Mammary epithelial cell (primary cell): ENCODE measurements at regions of chr3 and their contacts with region 1.

Region 1: DNA sequence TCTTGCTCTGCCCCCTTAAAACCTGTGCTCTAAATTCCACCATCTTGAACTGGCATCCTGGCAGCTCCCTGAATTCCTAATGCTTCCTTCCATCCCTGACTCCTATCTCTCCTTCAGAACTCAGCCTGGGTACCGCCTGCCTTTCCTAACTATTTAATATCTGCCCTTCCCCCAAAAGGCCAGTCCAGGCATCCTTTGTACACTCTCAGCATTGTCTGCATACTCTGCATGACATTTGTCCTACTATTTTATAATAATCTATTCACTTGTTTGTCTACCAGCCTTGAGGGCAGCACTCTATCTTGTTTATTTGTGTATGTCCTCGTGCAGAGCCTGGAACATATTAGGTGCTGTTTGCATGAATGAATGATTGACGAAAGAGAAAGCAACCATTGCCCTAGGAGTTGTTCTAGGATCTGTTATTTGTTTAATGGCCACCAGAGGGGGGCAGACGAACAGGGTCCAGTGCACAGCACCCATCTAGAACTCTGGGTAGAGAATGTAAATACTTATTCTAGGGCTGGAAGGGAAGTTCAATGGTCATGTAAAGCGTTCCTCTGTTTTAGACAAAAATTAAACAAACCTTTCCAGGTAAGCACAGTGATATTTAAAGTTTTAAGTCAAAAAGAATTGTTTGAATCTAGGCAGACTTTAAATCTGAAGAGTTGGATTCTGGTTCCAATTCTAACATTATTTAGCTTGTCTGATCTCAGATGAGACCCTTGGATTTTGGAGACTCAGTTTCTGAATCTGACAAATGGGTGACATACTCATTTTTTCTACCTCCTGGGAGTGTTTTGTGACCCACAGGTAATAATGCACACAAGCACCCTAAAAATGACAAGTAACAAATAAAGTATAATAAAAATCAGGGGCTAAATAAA is 125.8 kb upstream of the GALNT15 start:
- DNase-seq: peak; percentile 55
- H3K4me3 ChIP-seq: peak overlapping the region in 2 of 3 experiments; percentile 6 to 16
- H3K27ac ChIP-seq: no peak overlapping the region
- H3K4me1 ChIP-seq: no peaks in the 10 kb centered on the region
- H3K27me3 ChIP-seq: no peaks in the 10 kb centered on the region
- CTCF ChIP-seq: peak; percentile 58 to 81

Region 2: GRCh38 chr3:15815696-15816095 is 233.0 kb before region 1 on chr3:
- CTCF ChIA-PET with region 1: no interaction called
- dilution Hi-C with region 1: no loop called
- in situ Hi-C with region 1: no loop called
- intact Hi-C with region 1: loop called (anchors 1 kb)
- DNase-seq: peak; percentile 41
- H3K4me3 ChIP-seq: no peak overlapping the region
- H3K27ac ChIP-seq: no peak overlapping the region
- H3K4me1 ChIP-seq: peaks cover 9% of the 10 kb centered on the region
- H3K27me3 ChIP-seq: no peaks in the 10 kb centered on the region
- CTCF ChIP-seq: peak in 1 of 2 donors; percentile 31

Region 3: GRCh38 chr3:16140894-16141285 is 92.2 kb after region 1 on chr3:
- CTCF ChIA-PET with region 1: interaction called, 4 read pairs
- dilution Hi-C with region 1: no loop called
- in situ Hi-C with region 1: no loop called
- intact Hi-C with region 1: loop called (anchors 1 kb)
- DNase-seq: no peak
- H3K4me3 ChIP-seq: no peak overlapping the region
- H3K27ac ChIP-seq: no peak overlapping the region
- H3K4me1 ChIP-seq: peaks cover 11% of the 10 kb centered on the region
- H3K27me3 ChIP-seq: no peaks in the 10 kb centered on the region
- CTCF ChIP-seq: no peak

Region 4: GRCh38 chr3:16183601-16184270 is 135.1 kb after region 1 on chr3:
- CTCF ChIA-PET with region 1: interaction called, 6 read pairs
- dilution Hi-C with region 1: no loop called
- in situ Hi-C with region 1: loop called (anchors 5 to 10 kb)
- intact Hi-C with region 1: loop called (anchors 1 kb)
- DNase-seq: peak; percentile 24
- H3K4me3 ChIP-seq: no peak overlapping the region
- H3K27ac ChIP-seq: no peak overlapping the region
- H3K4me1 ChIP-seq: peaks cover under 1% of the 10 kb centered on the region
- H3K27me3 ChIP-seq: no peaks in the 10 kb centered on the region
- CTCF ChIP-seq: no peak